ENCODE measurements at regions of chrX and their contacts with region 1.

Region 1: DNA sequence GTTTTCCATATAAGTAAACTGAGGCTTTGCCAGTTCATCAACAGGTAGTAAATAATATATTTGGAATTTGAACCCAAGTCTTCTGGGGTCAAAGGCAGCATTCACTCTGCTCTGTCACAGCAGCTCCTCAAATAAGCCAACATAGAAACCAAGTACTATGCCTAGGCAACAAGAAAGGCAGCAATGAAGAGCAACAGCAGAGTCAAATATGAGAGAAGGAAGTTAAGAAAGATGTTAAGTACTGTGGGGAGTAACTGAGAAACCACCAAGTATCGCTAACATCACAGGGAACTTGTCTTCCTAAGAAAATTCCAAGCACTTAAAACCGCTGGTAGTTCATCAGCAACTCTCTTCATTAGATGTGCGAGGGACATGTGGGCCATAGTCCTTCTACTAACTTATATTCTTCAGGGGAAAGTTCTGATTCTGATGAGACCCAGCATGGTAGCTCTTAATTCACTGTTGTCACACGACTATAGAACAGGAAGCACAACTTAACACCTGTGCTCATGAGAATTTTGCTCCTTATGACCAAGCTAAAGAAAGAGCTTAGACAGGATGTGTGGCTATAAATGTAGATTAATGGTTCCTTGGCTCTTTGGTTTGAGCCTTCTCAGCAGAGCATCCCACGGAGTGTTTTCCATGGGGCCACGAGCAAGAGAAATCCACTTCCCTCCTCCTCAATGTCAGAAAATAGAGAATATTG is 107.8 kb downstream of the AR start:
- DNase-seq: no peak
- ATAC-seq: no peak

Region 2: DNA sequence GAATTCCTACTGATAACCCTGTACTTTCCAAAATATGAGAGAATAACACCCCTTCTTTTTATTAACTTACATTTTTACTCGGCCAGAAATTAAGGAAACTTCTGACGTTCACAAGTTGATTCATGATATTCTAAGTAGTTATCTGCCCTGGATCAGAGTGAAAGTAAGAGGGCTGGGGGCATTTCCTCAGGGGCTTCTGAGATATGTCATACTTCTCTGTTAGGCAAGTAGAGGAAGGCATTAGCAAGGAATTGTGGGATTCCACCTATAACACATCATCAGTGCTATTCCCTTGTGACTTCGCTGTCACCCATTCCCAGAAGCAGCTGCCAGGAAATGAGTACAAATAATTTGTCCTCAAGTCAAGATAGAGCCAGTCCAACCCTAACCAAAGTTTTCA is 116.1 kb before region 1 on chrX:
- intact Hi-C with region 1: no loop called
- DNase-seq: no peak
- ATAC-seq: no peak

Region 3: DNA sequence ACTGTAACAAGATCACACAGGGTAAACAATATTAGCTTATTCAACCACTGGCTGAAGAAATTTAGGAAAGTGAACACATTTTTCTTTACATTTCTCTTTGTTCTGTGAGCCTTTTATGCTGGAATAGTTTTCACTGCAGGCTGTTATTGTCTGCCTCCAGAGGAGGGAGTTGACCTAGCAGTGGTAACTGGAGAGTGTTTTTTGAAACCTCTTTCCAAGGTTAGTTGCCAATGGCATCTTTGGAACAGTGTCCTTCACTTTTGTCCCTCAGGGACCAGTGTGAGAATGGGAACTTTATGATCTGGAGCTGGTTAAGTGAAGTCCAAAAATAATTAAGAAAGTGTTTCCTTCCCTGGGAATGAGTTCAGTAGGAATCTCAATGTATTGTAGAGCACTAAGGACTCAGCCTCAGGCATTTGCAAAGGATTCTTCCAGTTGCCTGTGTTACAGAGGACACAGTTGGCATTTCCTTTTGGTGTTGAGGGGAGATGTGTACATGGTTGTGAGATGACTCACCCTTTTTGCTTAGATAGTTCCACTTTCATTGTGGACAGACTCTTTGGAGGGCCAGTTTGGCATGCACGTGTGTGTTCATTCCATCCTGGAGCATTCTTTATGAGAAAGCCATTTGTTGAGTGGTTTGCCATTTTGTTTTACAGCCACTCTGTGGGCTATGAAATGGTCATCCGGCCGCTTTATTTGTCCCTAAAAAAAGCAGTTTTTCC is 46.4 kb before region 1 on chrX:
- intact Hi-C with region 1: no loop called
- DNase-seq: no peak
- ATAC-seq: peak; percentile 57

Region 4: DNA sequence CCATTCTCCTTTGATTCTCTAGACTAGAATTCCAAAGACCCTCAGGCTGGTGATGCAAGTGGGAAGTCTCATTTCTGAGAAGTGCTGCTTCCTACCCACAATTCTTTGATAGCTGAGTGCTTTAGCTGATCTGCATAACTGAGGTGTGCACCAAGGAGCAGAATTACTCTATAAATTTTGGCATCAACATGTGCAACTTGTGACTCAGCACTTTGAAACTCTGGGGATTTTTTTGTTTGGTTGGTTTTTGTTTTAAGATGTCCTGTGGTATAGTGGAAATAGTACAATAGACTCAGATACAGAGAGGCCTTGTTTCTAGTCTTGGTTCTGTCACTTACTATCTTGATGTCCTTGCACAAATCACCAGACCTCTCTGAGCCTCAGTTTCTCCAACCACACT is 40.7 kb after region 1 on chrX:
- intact Hi-C with region 1: loop called (anchors 2 kb)
- DNase-seq: no peak
- ATAC-seq: no peak